ENCODE measurements at regions of chr18 and their contacts with region 1.

Region 1: GRCh38 chr18:7395566-7395965 is 164.7 kb downstream of the LRRC30 start:
- DNase-seq: no peak
- H3K4me3 Mint-ChIP-seq: no peak overlapping the region
- H3K27ac Mint-ChIP-seq: no peak overlapping the region
- H3K4me1 Mint-ChIP-seq: peaks cover 5% of the 10 kb centered on the region
- H3K27me3 Mint-ChIP-seq: no peaks in the 10 kb centered on the region
- CTCF ChIP-seq: no peak

Region 2: DNA sequence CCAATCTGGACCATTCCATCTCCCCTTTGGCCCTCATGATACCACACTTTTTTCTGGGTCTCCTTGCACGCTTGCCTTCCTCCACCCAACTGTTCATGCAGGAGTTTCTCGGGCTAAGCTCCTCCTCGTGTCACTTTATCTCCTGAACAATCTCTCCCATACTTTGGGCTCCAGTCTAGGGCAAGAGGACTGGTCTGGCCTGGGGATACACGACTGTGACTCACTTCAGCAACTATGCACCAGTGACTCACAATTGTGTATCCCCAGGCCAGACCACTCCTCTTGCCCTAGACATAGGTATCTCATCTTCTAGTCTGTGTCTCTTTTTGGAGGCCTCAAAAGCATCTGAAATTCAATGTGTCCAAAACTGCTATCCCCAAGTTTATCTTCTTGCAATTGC is 22.2 kb after region 1 on chr18:
- CTCF ChIA-PET with region 1: no interaction called
- POLR2A ChIA-PET with region 1: interaction called, 10 read pairs
- intact Hi-C with region 1: no loop called
- DNase-seq: peak; percentile 95
- H3K4me3 Mint-ChIP-seq: peak overlapping the region; percentile 9
- H3K27ac Mint-ChIP-seq: peak overlapping the region; percentile 68
- H3K4me1 Mint-ChIP-seq: peaks cover 41% of the 10 kb centered on the region
- H3K27me3 Mint-ChIP-seq: no peaks in the 10 kb centered on the region
- CTCF ChIP-seq: no peak